ENCODE measurements at regions of chr4 and their contacts with region 1.

Region 1: GRCh38 chr4:52861879-52862616 is at the start of gene RASL11B:
- DNase-seq: peak; percentile 98
- H3K4me3 ChIP-seq: peak within 1 kb of the TSS; percentile 71 to 73
- H3K27ac ChIP-seq: peak within 1 kb of the TSS in 1 of 2 experiments; percentile 100; a peak in 2 of 4 replicates
- H3K4me1 ChIP-seq: peaks cover 0 to 31% of the 10 kb centered on the region in 2 experiments; a peak in 2 of 4 replicates
- H3K27me3 ChIP-seq: no peaks in the 10 kb centered on the region; the same call in 1 of the 2 replicates
- CTCF ChIP-seq: peak; percentile 15; the same call in 1 of the 2 replicates
- EP300 ChIP-seq: no peak
- RAD21 ChIP-seq: no peak; the same call in none of the 2 replicates
- polyA plus RNA-seq, gene RASL11B: 0.54 and 1.2 TPM in 2 replicates

Region 2: DNA sequence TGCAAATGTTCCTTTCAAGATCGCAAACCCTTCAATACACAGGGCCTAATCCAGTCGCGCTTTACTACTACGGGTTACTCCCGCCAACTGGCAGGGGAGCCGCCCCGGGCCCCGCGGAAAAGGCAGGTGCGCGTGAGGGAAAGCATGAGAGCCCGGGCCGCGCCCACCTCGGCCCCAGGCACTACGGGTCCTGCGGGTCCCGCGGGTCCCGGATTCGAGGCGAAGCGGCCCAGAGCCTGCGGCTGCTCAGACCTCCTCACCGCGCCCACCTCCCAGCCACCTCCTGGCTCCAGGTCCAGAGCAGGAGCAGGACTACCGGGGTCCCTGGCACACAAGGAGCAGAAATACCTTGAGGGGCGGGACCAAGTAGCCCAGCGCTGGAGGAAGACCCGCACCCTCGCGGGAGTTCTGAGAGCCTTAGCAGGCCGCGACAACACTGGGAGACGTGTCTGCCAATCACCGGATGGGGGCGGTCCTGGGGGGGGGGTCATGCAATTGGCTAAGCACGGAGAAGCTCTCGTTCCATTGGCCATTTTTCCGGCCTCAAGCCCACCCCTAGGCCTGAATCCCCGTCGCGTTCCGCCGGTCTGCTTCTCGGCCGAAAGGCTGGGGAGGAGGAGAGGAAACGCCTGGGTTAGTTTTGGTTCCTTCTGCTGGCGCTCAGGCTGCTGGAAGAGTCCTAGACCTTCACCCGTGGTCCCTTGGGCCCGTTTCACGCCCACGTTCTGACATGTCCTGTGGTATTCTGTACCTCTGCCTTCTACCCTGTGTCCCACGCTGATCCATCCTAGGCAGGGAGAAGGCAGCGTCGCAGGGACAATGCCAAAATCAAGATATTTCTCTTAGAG is 139.9 kb before region 1 on chr4:
- CTCF ChIA-PET with region 1: no interaction called
- POLR2A ChIA-PET with region 1: interaction called, 10 read pairs
- DNase-seq: peak; percentile 95
- H3K4me3 ChIP-seq: peak overlapping the region; percentile 72 to 80
- H3K27ac ChIP-seq: peak overlapping the region; percentile 42 to 96; a peak in 3 of 4 replicates
- H3K4me1 ChIP-seq: no peaks in the 10 kb centered on the region; a peak in 1 of 4 replicates
- H3K27me3 ChIP-seq: no peaks in the 10 kb centered on the region
- CTCF ChIP-seq: no peak
- EP300 ChIP-seq: no peak
- RAD21 ChIP-seq: 0 out of 2 replicates have a peak, but pooled peaks have one; percentile 16

Measured in SK-N-SH (cell line).